Lower leg skin (tissue), 4 donors: ENCODE measurements at regions of chr1 and their contacts with region 1.

Region 1: GRCh38 chr1:21255278-21255942 is 34.9 kb downstream of the ECE1 start:
- DNase-seq: peak; percentile 87 to 98
- H3K4me3 ChIP-seq: no peak overlapping the region
- CTCF ChIP-seq: peak in 1 of 3 donors; percentile 85
- POLR2A ChIP-seq: no peak

Region 2: DNA sequence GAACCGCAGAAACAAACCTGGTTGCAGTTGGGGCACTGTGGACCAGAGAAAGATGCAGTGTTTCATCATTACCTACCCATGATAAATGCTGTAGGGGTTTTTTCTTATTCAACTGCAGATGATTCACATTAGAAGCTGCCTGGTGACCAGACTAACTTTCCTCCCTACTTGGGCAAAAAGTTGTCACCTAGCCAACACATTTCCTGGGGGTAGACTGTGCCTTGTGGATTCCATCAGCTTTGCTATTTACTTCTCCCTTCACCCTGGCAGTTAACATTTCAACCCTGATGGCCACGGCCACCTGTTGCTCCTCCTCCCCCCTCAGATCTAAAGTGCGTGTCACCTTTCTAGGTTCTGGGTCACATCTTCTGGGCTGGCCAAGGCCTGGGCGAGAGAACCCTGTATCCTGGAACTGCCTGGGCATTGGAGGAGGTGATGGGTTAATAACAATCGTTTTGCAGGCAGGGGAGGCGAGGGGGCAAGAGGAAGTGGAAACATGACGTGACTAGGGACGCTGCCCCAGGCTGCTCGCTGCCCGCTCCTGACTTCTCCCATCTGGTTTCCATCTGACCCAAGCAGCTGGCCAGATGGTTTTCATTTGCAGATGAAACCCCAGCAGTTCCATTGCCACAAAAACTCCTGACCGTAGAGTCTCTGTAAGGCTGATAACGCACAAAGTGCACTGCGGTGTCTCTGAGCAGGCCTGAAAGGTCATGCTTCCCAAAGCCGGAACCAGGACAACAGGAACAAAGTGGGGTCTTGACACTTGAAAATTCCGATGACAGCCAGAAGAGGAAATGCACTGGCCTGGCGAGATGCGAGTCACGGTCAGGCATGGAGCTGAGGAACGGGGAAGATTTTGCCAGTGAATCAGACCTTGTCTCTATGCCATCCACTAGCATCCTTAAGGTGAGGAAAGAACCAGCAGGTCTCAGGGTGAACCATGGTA is 1806.6 kb before region 1 on chr1:
- intact Hi-C with region 1: loop called (anchors 5 kb)
- DNase-seq: peak; percentile 75 to 91
- H3K4me3 ChIP-seq: no peak overlapping the region
- CTCF ChIP-seq: no peak
- POLR2A ChIP-seq: no peak

Region 3: DNA sequence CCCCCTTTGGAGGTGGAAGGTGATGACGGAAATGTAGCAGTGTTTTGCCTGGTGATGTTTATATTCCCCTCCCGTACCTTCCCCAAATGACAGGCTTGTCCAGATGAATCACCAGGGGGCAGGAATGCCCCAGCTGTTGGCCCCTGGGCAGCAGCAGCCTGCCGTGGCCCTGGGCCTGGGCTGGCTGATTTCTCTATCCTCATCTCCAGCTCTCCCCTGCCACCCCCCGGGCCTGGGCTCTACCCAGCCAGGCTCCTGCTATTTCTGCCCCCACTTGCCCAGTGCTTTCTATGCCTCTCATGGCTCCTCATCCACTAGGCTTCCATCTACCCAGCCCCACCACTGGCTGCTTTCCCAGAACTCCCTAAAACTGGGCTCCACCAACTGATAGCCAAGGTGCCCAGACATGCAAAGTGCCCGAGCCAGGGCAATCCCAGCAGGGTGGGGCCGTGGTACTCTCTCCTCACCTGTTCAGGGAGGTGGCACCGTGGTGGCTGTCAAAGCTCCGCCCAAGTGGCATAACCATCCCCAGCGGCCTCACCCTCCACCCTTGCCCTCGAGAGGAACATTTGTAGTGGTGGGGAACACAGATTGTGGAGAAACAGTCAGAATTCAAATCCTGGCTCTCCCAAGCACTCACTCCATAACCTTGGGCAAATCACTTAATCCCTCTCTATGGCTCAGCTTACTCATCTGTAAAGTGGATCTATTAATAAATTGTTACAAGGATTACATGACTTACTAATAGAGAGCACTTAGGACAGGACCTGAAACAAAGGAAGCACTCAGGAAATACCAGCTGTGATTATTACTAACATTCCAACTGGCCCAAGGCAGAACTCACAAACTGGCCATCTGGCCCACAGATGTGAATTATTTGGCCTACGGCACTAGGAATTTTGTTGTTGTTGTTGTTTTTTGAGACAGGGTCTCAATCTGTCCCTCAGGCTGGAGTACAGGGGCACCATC is 47.6 kb after region 1 on chr1:
- intact Hi-C with region 1: no loop called
- DNase-seq: no peak
- H3K4me3 ChIP-seq: no peak overlapping the region
- CTCF ChIP-seq: no peak
- POLR2A ChIP-seq: no peak

Region 4: GRCh38 chr1:21368515-21369289 is 113.3 kb after region 1 on chr1:
- intact Hi-C with region 1: loop called (anchors 5 kb)
- DNase-seq: peak; percentile 70 to 94
- H3K4me3 ChIP-seq: no peak overlapping the region
- CTCF ChIP-seq: peak in 2 of 3 donors; percentile 68 to 98
- POLR2A ChIP-seq: no peak